ENCODE measurements at regions of chr6 and their contacts with region 1.

Region 1: DNA sequence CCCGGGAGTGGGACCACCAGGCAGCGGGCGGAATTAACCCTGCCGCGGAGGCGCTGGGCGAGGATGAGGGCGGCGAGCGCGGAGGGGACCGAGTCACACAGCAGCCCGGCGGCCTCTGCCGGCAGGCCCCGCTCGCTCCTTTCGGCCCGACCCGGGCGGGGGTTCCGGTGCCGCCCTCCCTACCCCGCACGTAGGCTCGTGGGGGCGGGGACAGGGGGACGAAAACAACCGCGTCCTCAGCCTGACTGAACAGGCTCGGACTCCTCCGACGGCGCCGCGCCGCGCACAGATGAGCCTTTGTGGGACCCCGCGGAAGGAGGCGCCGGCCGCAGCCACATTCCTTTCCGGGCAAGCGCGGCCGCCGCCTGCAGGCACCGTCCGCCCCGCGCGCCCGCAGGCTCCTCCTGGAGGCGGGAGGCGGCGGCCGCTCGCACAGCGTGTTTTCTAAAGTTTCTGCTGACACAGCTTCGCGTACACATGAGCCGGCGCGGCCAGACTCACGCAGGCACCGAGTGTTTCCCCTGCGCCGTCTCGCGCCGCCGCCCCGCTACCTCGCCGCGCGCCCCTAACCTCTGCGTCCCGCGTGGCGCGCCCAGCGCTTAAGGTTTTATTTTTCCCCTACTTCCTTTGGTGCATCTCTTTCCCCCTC is 244.3 kb downstream of the ARID1B start:
- DNase-seq: peak; percentile 96

Region 2: DNA sequence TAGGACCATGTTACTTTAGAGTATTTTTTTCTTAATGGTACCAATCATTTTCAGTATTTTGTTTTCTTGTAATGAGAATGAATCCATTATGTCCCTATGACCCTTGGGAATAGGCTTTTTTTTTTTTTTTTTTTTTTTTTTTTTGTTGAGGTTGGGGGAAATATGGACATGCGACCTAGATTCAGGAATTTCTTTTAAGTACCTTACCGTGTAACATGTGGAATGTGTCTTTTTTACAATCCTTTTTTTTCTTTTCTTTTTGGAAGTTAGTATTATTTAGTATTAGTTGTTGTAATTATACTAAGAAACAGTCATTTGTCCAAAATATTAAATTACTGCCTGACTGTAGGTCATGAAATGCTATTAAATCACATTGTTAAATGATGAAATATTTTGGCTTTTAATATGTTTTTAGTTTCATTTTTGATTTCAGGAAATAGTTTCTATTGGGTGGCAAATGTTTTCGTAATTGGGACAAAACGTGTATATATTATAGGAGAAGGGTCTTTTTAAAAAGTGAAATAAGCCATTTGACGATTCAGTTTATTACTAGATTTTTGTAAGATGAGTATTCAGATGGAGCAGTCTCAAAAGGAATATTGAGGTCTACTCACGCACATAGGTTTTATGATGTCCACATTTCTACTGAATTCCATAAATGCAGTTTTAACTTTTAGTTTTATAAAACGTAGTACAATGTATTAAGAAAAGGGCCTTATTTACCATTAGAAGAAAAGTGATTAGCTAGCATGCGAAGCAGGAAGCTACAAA is 239.4 kb before region 1 on chr6:
- intact Hi-C with region 1: loop called (anchors 1 kb)
- DNase-seq: no peak

Region 3: GRCh38 chr6:156866220-156867015 is 155.1 kb before region 1 on chr6:
- intact Hi-C with region 1: loop called (anchors 5 kb)
- DNase-seq: no peak

Region 4: DNA sequence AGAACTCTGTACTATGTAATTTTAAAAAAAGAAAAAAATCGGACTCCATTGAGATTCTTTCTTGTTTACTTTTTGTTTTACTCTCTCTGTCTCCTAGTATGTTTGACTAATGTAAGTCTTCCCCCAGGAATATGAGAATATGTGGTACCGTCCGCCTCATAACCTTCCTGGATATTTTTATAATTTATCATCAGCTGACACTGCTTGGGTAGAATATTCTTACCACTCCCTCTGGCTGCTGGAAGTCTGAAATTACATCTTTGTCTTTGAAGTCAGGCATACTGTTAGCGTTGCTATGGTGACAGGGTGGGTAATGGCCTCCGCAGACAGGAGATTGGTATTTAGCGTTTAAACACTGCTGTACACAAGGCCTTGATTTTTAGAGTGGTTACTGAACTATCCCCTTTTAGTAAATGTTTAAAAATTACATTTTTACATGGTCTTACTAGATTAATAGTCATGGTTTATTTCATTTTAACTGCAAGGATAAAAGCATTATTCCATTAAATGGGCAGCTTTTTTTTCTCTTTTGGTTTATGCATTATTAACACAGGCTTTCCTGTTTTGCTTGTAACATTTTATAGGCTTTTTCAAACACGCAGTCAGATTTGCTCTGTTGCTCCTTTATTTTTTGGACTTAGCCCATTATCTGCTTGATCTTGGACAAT is 67.9 kb before region 1 on chr6:
- intact Hi-C with region 1: loop called (anchors 5 kb)
- DNase-seq: no peak

Region 5: GRCh38 chr6:157054531-157054979 is 33.1 kb after region 1 on chr6:
- intact Hi-C with region 1: no loop called
- DNase-seq: no peak

Region 6: GRCh38 chr6:157099912-157100593 is 78.6 kb after region 1 on chr6:
- intact Hi-C with region 1: no loop called
- DNase-seq: no peak